H1 (cell line): ENCODE measurements at regions of chr12 and their contacts with region 1.

Region 1: GRCh38 chr12:54596526-54596946 is 8.1 kb upstream of the PPP1R1A start:
- DNase-seq: peak; percentile 50 to 88
- H3K4me3 ChIP-seq: no peak overlapping the region
- H3K27ac ChIP-seq: no peak overlapping the region
- H3K4me1 ChIP-seq: 0 out of 7 replicates have a peak, but pooled peaks cover 0 to 2% (median 0%) of the 10 kb centered on the region in 4 experiments
- H3K27me3 ChIP-seq: peaks cover 0 to 19% (median 13%) of the 10 kb centered on the region in 4 experiments; a peak in 3 of 7 replicates
- CTCF ChIP-seq: peak; percentile 75 to 97 (median 84)
- EP300 ChIP-seq: no peak
- POLR2A ChIP-seq: no peak
- RAD21 ChIP-seq: peak; percentile 72 to 77

Region 2: DNA sequence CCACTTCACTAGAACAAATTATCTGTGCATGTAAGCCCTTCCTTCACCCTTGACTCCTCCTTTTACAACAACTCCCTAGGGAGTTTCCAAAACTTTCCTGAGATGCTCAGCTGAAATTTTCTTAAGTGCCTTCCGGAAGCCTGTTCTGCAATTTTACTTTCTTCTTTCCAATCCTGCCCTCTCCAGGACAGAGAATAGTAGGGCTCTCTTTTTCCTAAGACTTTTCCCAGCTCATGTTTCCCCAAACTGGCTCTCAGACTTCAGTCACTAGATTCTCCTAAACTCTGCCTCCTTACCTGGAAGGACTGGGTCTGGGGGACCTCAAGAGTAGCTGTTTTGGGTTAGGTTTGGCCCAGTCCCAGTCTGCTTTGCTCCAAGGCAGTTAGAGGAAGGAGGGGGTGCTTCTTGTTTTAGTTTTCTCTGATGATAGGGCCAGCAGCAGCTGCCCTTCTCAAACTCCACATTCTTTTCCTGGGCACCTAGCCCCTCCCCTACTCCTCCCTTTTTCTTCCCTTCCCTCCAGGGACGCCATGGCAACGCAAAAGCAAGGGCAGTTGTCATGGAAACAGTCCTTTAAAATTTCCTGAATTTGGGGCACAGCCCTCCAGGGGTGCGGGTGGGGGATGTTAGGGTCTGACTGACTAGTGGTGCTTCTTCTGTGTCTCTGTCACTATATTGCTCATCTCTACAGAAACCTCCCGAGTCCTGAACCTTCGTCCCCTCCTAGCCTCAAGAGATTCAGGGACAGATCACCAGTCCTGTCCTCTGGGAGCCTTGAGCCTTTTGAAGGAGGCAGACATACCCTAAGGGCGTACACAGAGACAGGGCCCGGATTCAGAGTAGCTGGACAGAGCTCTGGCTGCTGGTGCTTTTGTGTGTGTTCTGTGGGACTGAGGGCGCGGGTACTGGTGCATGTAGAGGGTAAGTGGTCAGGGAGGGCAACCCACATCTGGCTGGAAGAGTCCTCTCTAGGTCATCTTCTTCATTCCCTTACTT is 25.0 kb before region 1 on chr12:
- CTCF ChIA-PET with region 1: interaction called, 99 read pairs
- POLR2A ChIA-PET with region 1: no interaction called
- DNase-seq: peak in 1 of 2 experiments; percentile 64
- H3K4me3 ChIP-seq: peak overlapping the region in 1 of 4 experiments; percentile 15; a peak in 1 of 8 replicates
- H3K27ac ChIP-seq: no peak overlapping the region
- H3K4me1 ChIP-seq: peaks cover 6 to 16% (median 8%) of the 10 kb centered on the region in 4 experiments; a peak in 6 of 7 replicates
- H3K27me3 ChIP-seq: peaks cover 0 to 3% (median under 1%) of the 10 kb centered on the region in 4 experiments; a peak in 3 of 7 replicates
- CTCF ChIP-seq: peak in 2 of 3 experiments; percentile 35 to 60; a peak in 3 of 4 replicates
- EP300 ChIP-seq: no peak
- POLR2A ChIP-seq: no peak
- RAD21 ChIP-seq: peak; percentile 68 to 74

Region 3: GRCh38 chr12:54616933-54617680 is 20.6 kb after region 1 on chr12:
- CTCF ChIA-PET with region 1: interaction called, 16 read pairs
- POLR2A ChIA-PET with region 1: no interaction called
- DNase-seq: no peak
- H3K4me3 ChIP-seq: no peak overlapping the region
- H3K27ac ChIP-seq: no peak overlapping the region
- H3K4me1 ChIP-seq: no peaks in the 10 kb centered on the region
- H3K27me3 ChIP-seq: peaks cover 5 to 28% (median 16%) of the 10 kb centered on the region in 4 experiments
- CTCF ChIP-seq: no peak
- EP300 ChIP-seq: no peak
- POLR2A ChIP-seq: no peak
- RAD21 ChIP-seq: no peak

Region 4: GRCh38 chr12:54723379-54724256 is 127.1 kb after region 1 on chr12:
- CTCF ChIA-PET with region 1: interaction called, 11 read pairs
- POLR2A ChIA-PET with region 1: no interaction called
- DNase-seq: no peak
- H3K4me3 ChIP-seq: no peak overlapping the region
- H3K27ac ChIP-seq: no peak overlapping the region
- H3K4me1 ChIP-seq: peaks cover 0 to 5% (median 3%) of the 10 kb centered on the region in 4 experiments; a peak in 2 of 7 replicates
- H3K27me3 ChIP-seq: no peaks in the 10 kb centered on the region
- CTCF ChIP-seq: peak in 2 of 3 experiments; percentile 59 to 68; a peak in 3 of 4 replicates
- EP300 ChIP-seq: no peak
- POLR2A ChIP-seq: no peak
- RAD21 ChIP-seq: peak; percentile 21 to 39; a peak in 3 of 4 replicates

Region 5: DNA sequence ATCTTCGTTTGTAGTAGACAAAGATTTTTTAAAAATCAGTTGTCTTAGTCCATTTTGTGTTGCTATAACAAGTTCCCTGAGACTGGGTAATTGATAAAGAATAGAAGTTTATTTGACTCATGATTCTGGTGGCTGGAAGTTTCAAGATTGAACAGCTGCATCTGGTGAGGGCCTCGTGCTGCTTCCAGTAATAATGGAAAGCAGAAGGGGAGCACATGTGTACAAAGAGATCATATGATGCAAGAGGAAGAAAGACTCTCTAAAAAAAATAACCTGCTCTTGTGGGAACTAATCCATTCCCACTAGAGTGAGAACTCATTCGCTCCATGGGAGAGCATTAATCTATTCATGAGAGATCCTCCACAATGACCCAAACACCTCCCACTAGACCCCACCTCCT is 282.6 kb after region 1 on chr12:
- CTCF ChIA-PET with region 1: no interaction called
- POLR2A ChIA-PET with region 1: no interaction called
- DNase-seq: no peak
- H3K4me3 ChIP-seq: no peak overlapping the region
- H3K27ac ChIP-seq: no peak overlapping the region
- H3K4me1 ChIP-seq: no peaks in the 10 kb centered on the region
- H3K27me3 ChIP-seq: no peaks in the 10 kb centered on the region
- CTCF ChIP-seq: no peak
- EP300 ChIP-seq: no peak
- POLR2A ChIP-seq: no peak
- RAD21 ChIP-seq: no peak